ENCODE measurements at regions of chr3 and their contacts with region 1.

Region 1: DNA sequence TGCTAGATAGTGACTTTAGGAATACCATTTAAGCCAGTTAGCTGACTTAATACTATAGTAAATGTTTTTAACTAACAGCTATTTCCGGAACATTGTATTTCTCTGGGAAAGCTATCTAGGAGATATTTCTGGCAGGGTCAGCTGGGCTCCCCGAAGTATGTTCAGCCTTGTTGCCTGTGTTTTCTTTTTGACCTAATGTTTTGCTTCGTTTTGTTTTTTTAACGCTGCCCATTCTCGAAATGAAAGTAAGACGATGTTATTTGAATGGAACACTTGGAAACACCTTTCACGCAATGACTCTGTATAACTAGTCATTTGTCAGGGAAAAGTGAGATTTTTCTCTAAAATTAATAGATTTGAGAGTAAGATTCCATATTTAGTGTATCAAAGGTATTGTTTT is 702.9 kb upstream of the NAALADL2 start:
- DNase-seq: no peak

Region 2: DNA sequence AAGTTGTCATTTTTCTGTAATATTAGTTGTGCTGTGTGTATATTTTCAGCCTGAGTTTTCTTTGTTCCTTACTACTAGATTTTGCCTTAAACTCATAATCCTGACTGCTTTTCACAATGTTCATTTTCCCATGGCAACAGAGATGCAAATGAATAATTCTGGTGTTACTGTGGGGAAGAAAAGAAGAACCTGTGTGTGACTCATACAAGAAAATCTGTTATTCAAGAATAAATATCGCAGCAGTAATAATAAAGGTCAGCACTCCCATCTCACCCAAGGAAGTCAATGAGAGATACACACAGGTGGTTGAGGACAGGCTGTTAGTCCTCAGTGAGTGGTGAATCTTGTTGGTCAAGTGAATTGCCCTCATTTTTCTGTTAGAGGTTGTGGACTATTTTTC is 46.4 kb after region 1 on chr3:
- intact Hi-C with region 1: loop called (anchors 5 kb)
- DNase-seq: no peak

Region 3: DNA sequence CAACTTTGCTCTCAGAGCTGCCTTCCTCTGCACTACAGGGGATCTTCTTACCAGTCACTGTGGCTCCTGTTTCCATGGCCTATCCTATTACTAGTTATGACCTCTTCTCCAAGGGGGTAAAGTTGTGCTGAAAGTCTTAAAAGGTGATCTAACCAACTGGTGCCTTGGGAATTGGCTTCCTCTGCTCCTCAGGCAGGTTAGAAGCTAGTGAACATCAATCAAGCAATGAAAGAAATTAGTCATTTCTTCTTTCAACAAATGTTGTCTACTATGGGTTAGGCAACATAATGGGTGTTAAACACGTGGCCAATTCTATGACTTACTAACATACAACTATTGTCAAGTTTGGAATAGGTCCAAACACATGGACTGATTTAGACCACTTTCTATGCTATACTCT is 131.5 kb after region 1 on chr3:
- intact Hi-C with region 1: no loop called
- DNase-seq: no peak

Region 4: GRCh38 chr3:174540116-174540908 is 384.1 kb after region 1 on chr3:
- intact Hi-C with region 1: no loop called
- DNase-seq: no peak